ENCODE measurements at regions of chr9 and their contacts with region 1.

Region 1: GRCh38 chr9:131349881-131350563 is 43.9 kb upstream of the PRRC2B start:
- DNase-seq: peak; percentile 70 to 96 (median 88)
- ATAC-seq: peak; percentile 99
- H3K4me3 ChIP-seq: no peak overlapping the region
- H3K27ac ChIP-seq: no peak overlapping the region
- H3K4me1 ChIP-seq: peaks cover 0 to 11% of the 10 kb centered on the region in 2 donors
- H3K27me3 ChIP-seq: no peaks in the 10 kb centered on the region
- CTCF ChIP-seq: peak; percentile 77 to 78

Region 2: DNA sequence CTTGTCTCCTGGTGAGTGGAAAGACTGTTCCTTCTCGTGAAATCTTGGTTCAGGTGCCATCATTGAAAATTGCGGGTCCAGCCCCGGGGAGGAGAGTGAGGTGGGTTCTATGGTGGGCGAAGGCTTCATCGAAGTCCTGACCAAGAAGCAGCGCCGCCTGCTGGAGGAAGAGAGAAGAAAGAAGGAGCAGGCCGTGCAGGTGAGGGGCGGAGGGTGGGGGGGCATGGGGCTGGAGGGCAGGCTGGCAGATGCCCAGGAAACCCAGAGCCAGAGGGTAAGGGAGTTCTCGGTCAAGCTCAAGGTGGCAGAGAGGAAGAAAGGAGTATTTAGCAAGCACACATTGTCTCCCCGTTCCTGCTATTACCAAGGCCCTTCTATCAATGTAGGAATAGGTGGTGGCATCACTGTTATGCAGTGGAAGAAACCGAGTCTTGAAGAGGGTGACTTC is 128.4 kb after region 1 on chr9:
- intact Hi-C with region 1: loop called in 1 of 2 experiments (anchors 10 kb)
- DNase-seq: peak in 2 of 4 donors; percentile 45 to 61
- ATAC-seq: no peak
- H3K4me3 ChIP-seq: no peak overlapping the region
- H3K27ac ChIP-seq: no peak overlapping the region
- H3K4me1 ChIP-seq: no peaks in the 10 kb centered on the region
- H3K27me3 ChIP-seq: no peaks in the 10 kb centered on the region
- CTCF ChIP-seq: peak; percentile 33 to 56

Region 3: DNA sequence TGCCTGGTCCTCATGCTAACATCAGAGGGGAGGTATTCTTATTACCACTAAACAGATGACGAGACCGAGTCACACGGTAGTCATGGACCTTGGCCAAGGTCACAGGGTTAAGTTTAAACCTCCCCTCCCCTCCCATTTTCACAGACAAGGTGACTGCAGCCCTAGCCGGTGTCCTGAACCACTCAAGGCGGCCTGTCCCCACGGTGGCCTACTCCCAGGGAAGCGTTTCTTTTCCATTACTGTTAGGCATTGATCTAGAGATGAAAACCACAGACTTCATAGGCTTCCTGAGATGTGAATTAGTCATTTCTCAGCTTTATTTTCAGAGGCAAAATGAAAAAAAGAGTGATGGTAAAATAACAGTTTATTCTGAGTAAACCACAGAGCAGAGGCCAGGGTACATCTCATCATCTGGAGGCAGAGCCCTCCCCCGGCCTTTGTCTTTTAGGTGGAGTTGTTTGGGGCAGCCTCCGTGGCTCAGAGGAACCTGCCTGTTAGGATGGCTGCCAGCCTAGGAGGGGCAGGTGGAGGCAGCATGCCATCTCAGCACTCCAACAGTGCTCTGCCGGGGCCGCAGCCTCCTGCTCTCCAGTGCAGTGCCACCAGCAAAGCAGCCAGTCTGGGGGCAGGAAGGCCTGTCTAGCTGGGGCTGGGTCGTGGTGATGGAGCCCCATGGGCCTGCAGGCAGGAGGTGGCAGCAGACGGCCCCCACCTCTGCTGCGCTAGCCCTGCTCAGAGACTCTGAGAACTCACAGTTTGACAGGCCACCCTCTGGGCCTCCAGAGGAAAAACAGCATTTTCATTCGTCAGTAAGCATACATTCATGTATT is 318.6 kb after region 1 on chr9:
- intact Hi-C with region 1: no loop called
- DNase-seq: peak in 1 of 4 donors; percentile 74
- ATAC-seq: peak; percentile 56
- H3K4me3 ChIP-seq: no peak overlapping the region
- H3K27ac ChIP-seq: peak overlapping the region; percentile 69 to 71
- H3K4me1 ChIP-seq: peaks cover 20 to 79% of the 10 kb centered on the region in 2 donors
- H3K27me3 ChIP-seq: no peaks in the 10 kb centered on the region
- CTCF ChIP-seq: no peak

Region 4: GRCh38 chr9:132651254-132651653 is 1301.2 kb after region 1 on chr9:
- intact Hi-C with region 1: loop called in 1 of 2 experiments (anchors 10 kb)
- DNase-seq: peak in 2 of 4 donors; percentile 17 to 35
- ATAC-seq: peak; percentile 45
- H3K4me3 ChIP-seq: no peak overlapping the region
- H3K27ac ChIP-seq: no peak overlapping the region
- H3K4me1 ChIP-seq: peaks cover 0 to 4% of the 10 kb centered on the region in 2 donors
- H3K27me3 ChIP-seq: no peaks in the 10 kb centered on the region
- CTCF ChIP-seq: no peak